ENCODE measurements at regions of chr1 and their contacts with region 1.

Region 1: DNA sequence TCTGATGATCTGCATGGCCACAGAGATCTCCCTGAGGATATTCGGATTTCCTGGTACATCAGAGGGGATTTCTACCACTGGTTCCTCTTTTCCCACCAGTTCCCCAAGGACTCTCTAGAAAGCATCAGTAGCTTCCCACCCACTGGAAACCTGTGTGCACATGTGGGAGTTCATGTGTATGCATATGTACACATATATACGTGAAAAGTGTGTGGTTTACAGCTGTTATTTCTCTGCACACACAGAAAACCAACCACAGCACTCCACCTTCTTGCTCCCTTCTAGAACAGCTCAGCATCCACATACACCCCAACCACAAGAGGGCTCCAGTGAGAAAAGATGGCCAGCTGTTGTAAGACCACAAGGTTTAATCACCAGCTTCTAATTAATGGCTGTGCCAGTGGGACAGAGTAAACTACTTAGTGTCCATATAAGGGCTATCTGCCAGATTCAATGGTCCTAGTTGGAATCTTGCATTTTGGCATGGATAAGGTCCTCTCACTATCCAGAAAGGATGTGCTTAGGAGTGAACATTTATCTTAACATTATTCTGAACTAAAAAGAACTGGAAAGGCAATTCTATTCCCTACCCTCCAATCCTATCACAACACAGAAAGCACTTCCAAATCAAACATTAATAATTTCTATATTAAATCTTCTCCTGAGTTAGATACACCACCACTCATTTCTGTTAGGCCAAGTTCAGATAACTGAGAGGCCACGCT is 24.1 kb downstream of the GPR3 start:
- DNase-seq: no peak
- CTCF ChIP-seq: peak; percentile 64

Region 2: GRCh38 chr1:27402349-27402754 is 14.2 kb before region 1 on chr1:
- CTCF ChIA-PET with region 1: interaction called, 28 read pairs
- POLR2A ChIA-PET with region 1: no interaction called
- DNase-seq: no peak
- CTCF ChIP-seq: peak; percentile 44

Region 3: DNA sequence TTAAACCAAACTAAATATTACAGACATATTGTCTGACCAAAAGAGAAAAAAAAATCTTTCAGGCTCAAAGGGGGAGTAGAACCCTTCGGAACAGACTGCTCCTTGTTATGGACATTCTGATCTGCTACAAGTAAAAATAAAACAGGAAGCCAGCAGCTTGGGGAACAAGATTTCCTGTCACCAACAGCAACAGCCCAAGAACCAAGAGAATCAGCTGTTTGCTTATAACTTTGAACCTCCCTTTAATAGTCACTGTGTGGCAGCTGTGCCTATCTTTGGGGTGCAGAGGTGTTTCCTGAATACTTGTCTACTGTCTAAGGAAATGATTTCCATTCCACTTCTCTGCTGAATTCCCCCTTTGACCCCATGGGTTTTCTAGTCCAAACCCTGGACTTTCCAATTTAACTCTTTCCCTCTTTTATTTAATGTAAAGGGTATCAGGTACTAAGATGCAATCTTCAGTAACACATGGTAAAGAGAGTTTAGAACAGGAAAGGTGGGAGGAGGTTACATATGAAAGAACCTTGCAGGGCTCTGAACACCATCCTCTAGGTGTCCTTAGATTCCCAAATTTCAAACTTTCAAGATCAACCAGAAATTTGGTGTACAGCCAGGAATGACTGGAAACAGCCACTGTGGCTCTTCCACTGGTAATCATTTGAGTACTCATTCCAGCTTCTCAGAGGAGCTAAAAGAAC is 14.5 kb after region 1 on chr1:
- CTCF ChIA-PET with region 1: interaction called, 66 read pairs
- POLR2A ChIA-PET with region 1: no interaction called
- DNase-seq: no peak
- CTCF ChIP-seq: no peak

Region 4: DNA sequence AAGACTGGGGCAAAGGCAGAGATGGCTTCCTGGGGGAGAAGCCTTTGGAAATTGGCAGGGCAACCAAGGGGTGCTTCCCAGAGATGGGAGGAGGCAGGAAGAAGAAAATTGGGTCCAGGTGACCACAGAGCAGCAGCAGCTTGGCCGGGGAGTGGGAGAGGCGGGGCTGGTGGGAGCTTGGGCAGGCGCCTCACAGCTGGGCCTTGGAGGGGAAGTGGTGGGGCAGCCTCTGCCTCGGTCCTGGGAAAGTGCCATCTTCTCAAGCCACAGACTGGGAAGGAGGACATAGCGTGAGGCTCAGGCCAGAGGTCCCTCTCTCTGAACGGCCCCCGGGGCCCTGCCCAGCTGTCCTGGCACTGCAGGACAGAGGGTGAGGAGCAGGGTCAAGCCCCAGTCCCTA is 97.4 kb after region 1 on chr1:
- CTCF ChIA-PET with region 1: interaction called, 11 read pairs
- POLR2A ChIA-PET with region 1: no interaction called
- DNase-seq: no peak
- CTCF ChIP-seq: no peak

Region 5: GRCh38 chr1:27789540-27790041 is 373.0 kb after region 1 on chr1:
- CTCF ChIA-PET with region 1: no interaction called
- POLR2A ChIA-PET with region 1: no interaction called
- DNase-seq: no peak
- CTCF ChIP-seq: no peak

Measured in GM10248 (cell line).